Left cardiac atrium (tissue), 4 donors: ENCODE measurements at regions of chr10 and their contacts with region 1.

Region 1: GRCh38 chr10:10792681-10793080 is 225.0 kb upstream of the CELF2 start:
- DNase-seq: no peak
- ATAC-seq: peak; percentile 59 to 69

Region 2: GRCh38 chr10:10677479-10677878 is 115.2 kb before region 1 on chr10:
- intact Hi-C with region 1: no loop called
- DNase-seq: peak; percentile 68
- ATAC-seq: peak; percentile 82 to 92

Region 3: GRCh38 chr10:11036407-11037011 is 243.8 kb after region 1 on chr10:
- intact Hi-C with region 1: loop called in 1 of 2 experiments (anchors 10 kb)
- DNase-seq: no peak
- ATAC-seq: peak; percentile 70 to 80

Region 4: GRCh38 chr10:11270135-11270857 is 477.6 kb after region 1 on chr10:
- intact Hi-C with region 1: no loop called
- DNase-seq: peak; percentile 84
- ATAC-seq: peak; percentile 96